PC-3 (cell line): ENCODE measurements at regions of chr2 and their contacts with region 1.

Region 1: DNA sequence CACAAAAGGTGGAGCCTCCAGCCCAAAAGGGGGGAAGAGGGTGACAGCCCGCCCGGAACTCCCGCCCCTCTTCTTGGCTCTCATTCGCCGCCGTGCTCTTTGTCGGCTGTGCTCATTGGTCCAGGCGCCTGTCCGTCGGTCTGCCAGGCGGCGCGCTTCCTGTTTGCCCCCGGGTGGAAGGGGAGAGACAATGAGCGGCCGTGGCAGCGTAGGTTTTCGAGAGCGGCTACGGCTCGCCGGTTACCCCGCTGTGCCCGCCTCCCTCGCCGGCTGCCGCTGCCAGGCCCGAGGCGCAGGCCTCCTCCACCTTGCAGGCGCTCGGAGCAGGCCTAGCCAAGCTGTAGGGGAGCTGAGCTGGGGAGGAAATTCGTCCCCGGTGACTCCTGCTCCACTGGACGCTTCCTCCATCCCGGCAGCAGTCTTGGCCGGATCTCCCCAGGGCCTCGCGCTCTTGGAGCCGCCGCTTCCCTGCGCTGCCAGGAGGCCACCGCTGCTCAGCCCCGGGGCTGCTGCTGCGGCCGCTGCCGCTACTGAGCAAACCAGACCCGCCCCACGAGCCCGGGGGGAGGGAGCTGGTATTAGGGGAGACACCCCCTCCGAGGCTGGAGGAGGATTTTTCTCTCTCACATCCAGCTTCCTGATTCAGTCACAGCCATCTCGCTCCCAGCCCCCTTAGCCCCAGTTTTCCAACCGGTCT is at the start of gene SP3:
- DNase-seq: peak; percentile 96
- ATAC-seq: peak; percentile 74
- H3K4me3 ChIP-seq: peak within 1 kb of the TSS; percentile 82
- H3K27ac ChIP-seq: peak within 1 kb of the TSS; percentile 95
- H3K4me1 ChIP-seq: peaks cover 25% of the 10 kb centered on the region
- H3K27me3 ChIP-seq: no peaks in the 10 kb centered on the region
- CTCF ChIP-seq: no peak
- total RNA-seq, gene SP3: 82.2 and 117 TPM in 2 replicates

Region 2: DNA sequence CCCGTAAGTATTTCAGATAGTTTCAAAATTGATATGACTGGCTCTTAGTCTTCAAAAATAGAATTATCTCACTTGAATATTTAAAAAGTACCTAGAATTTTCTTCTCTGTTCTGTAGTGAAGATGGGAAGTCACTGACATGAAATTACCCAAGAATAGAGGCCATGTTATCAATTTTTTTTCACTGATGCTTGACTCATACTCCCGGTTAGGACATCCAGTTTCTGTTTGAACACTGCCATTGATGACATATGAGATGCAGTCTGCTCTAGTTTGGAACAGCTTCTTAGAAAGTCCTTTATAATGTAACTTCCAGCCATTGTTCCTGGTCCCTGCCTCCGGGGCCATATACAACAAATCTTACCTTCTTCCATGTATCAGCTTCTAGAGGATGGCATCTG is 863.8 kb before region 1 on chr2:
- CTCF ChIA-PET with region 1: no interaction called
- POLR2A ChIA-PET with region 1: no interaction called
- intact Hi-C with region 1: no loop called
- DNase-seq: no peak
- ATAC-seq: no peak
- H3K4me3 ChIP-seq: no peak overlapping the region
- H3K27ac ChIP-seq: no peak overlapping the region
- H3K4me1 ChIP-seq: no peaks in the 10 kb centered on the region; the same call in 1 of the 2 replicates
- H3K27me3 ChIP-seq: no peaks in the 10 kb centered on the region
- CTCF ChIP-seq: no peak

Region 3: DNA sequence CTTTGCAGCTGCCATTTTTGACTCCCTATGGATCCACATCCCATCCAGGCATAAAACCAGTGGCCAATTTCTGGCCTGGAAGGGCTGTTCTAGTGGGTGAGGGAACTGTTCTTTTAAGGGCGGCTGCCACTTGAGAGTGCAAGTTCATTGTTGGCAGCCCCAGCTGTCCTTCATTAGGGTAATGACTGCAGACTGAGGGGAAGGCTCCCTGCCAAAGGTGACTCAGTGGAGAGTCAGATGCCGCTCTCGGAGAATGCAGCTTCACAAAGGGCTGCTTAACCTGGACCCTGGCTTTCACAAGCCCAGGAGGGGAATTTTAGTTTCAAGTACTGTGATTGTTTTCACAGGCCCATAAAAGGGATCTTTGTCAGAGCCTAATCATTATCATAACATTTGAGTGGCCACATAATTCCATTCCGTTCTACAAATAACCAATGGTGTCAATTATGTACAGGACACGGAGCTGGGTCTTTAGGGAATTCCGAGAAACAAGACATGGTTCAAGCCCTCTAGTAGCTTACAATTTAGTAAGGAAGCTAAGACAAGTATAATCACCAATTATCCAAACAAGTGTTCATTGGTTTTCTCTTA is 375.1 kb before region 1 on chr2:
- CTCF ChIA-PET with region 1: no interaction called
- POLR2A ChIA-PET with region 1: no interaction called
- intact Hi-C with region 1: loop called (anchors 5 kb)
- DNase-seq: peak; percentile 98
- ATAC-seq: peak; percentile 86
- H3K4me3 ChIP-seq: peak overlapping the region; percentile 59
- H3K27ac ChIP-seq: peak overlapping the region; percentile 98
- H3K4me1 ChIP-seq: peaks cover 36% of the 10 kb centered on the region
- H3K27me3 ChIP-seq: no peaks in the 10 kb centered on the region
- CTCF ChIP-seq: no peak

Region 4: DNA sequence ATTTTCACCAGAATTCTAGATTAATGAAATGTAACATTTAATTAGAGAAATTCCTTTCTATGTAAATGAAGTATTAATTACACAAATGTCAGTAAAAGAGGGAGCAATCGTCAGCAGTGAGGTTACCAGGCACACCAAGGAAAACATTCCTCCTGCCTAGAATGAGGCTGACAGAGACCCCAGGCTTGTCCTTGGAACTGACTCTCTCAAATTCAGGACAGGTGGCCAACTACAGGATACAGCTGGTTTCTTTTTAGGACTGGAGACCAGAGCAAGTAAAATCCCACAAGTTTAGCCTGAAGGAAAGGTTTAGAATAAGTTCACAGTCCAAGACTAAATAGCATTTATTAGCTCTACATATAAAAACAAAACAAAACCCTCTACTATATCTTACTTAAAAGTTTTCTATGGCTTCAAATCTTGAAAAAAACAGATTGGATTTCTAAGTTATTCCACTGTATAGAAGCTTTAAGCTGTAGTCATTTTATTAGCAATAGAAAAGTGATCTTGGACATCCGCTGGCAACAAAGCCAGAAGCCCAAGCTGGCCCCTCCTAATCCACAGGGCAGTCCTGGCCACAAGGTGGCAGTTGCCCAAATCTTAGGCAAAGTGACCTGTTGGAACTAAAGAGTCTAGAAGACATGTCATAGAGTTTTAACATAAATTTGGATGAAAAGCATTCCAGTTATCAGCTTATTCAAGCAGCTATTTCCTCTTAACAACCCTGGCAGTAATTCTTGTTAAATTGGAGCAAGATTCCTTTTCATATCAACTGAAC is 81.3 kb before region 1 on chr2:
- CTCF ChIA-PET with region 1: no interaction called
- POLR2A ChIA-PET with region 1: no interaction called
- intact Hi-C with region 1: loop called (anchors 2 kb)
- DNase-seq: peak; percentile 78
- ATAC-seq: peak; percentile 91
- H3K4me3 ChIP-seq: no peak overlapping the region
- H3K27ac ChIP-seq: no peak overlapping the region
- H3K4me1 ChIP-seq: peaks cover 6% of the 10 kb centered on the region; the same call in 1 of the 2 replicates
- H3K27me3 ChIP-seq: no peaks in the 10 kb centered on the region
- CTCF ChIP-seq: peak; percentile 83

Region 5: DNA sequence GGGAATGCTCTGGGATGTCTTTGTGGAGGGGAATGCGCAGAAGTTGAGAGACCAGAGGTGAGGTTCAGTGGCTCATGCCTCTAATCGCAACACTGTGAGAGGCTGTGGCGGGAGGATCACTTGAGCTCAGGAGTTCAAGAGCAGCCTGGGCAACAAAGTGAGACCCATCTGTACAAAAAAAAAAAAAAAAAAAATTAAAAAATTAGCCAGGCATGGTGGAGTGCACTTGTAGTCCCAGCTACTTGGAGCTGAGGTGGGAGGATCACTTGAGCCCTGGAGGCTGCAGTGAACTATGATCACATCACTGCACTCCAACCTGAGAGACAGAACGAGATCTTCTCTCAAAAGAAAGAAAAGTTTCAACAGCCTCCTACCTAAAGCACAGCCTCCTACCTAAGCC is 57.0 kb after region 1 on chr2:
- CTCF ChIA-PET with region 1: interaction called, 16 read pairs
- POLR2A ChIA-PET with region 1: no interaction called
- intact Hi-C with region 1: no loop called
- DNase-seq: no peak
- ATAC-seq: no peak
- H3K4me3 ChIP-seq: no peak overlapping the region
- H3K27ac ChIP-seq: peak overlapping the region; percentile 97; the same call in 1 of the 2 replicates
- H3K4me1 ChIP-seq: peaks cover 12% of the 10 kb centered on the region; the same call in 1 of the 2 replicates
- H3K27me3 ChIP-seq: no peaks in the 10 kb centered on the region
- CTCF ChIP-seq: no peak

Region 6: DNA sequence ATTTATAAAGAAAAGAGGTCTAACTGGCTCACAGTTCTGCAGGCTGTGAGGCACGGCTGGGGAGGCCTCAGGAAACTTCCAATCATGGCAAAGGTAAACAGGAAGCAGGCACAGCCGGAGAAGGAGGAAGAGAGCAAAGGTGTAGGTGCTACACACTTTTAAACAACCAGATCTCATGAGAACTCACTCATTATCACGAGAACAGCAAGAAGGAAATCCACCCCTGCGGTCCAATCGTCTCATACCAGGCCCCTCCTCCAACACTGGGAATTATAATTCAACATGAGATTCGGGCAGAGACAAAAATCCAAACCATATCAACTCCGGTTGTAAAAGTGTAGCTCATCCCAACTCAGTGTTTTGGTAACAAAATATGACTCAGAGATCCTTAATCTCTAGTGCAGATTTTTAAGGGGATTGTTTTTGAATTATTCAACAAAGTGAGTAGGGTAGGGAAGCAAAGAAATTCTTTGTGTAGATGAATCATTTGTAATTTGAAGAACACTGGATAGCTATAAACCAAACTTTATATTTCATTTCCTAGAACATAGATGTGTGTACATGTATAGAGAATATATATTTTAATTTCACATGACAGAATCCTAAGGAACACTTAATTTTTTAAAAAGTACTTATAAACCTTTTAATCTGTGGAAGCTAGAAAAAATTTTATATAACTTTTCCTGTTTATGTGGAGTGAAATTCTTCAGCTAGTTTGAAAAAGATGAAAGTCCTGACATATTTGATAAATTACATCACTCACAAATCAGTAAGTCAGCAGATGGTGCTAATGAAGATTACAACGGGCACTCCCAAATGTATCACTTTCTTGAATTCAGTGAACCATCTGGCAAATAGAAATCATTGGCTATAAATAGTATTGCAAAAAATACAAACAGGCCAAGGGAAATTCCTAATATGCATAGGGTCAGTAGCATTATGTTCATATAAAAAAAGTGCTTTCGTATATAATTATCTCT is 152.8 kb after region 1 on chr2:
- CTCF ChIA-PET with region 1: no interaction called
- POLR2A ChIA-PET with region 1: interaction called, 5 read pairs
- intact Hi-C with region 1: loop called (anchors 5 kb)
- DNase-seq: peak; percentile 91
- ATAC-seq: peak; percentile 71
- H3K4me3 ChIP-seq: peak overlapping the region; percentile 37
- H3K27ac ChIP-seq: peak overlapping the region; percentile 96
- H3K4me1 ChIP-seq: peaks cover 66% of the 10 kb centered on the region
- H3K27me3 ChIP-seq: no peaks in the 10 kb centered on the region
- CTCF ChIP-seq: no peak

Region 7: DNA sequence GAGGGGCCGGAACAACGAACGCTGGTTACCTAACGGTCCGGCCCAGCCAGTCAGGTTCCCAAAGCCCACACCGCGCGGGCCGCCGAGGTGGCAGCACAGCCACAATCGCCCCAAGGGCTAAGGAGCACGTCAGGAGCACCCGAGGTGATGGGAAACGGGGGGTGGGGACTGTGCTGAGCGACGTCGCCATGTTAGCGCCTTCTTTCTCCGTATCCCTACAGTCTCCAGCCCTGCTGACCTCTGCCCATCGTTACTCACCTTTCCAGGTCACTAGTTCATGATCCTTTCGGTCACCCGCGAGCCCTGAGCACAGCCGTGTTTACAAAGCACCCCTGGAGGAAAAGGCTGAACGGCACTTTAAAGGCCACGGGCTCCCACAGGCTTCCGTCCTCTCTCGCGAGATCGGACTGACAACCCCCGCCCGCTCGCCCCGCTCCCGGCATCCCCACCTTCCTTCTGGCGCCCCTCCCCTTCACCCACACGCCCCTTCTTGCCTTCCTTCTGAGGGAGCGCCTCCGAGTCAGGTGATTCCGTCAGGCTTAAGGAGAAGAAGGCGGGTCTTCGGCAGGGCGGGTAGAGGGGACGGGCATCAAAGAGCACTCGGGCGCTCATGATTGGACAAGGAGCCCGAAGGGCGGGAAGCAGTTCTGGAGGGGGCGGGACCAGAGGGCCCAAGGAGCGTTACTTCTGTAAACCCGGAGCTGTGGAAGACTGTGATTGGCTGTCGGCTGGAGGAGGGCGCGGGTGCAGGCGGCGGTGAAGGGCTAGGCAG is 1202.5 kb after region 1 on chr2 and contains the start of gene ATF2:
- CTCF ChIA-PET with region 1: no interaction called
- POLR2A ChIA-PET with region 1: no interaction called
- intact Hi-C with region 1: loop called (anchors 10 kb)
- DNase-seq: peak; percentile 99
- ATAC-seq: peak; percentile 91
- H3K4me3 ChIP-seq: peak within 1 kb of the TSS; percentile 81
- H3K27ac ChIP-seq: peak within 1 kb of the TSS; percentile 58
- H3K4me1 ChIP-seq: peaks cover 14% of the 10 kb centered on the region
- H3K27me3 ChIP-seq: no peaks in the 10 kb centered on the region
- CTCF ChIP-seq: no peak
- total RNA-seq, gene ATF2: 12.6 and 15.0 TPM in 2 replicates